ENCODE measurements at regions of chr7 and their contacts with region 1.

Region 1: DNA sequence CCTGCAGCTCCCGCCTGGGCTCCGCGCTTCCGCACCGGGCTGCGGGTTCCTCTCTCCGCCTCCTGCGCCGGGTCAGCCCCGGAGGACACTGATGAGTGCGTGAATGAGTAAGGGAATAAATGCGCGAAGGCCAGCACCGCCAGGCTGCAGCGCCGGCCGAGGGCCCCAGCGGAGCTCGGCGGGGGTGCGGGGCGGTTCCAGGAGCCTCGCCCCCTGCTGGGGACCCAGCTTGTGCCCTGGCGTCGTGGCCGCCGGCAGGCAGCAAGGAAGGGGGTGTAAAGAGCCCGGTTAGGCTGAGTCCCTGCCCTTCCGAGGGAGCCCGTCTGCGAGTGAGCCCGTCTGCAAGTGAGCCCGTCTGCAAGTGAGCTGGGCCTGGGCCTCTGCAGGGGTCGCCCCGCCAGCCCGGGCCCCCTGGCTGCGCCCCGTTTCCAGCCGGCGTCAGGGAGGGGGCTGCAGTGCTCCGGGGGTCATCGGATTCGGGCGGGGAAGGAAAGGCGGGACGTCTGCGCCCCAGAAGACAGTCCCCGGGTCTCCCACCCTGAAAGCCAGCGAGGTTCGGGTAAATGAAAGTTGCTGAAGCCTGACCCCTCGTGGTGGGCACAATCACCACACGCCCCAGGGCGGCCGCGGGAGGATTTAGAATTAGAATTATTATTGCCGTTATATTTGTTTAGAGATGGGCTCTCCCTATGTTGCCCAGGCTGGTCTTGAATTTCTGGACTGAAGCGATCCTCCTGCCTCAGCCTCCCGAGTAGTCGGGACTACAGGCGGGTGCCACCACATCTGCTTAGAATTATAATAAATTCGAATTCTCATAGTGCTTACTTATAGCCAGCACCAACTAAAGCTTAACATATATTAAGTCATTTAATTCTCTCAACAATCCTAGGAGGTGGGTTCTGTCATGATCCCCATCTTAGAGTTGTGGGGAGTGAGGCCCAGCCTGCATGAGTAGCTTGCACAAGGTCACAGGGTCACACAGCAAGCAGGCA is 8.6 kb upstream of the CRYGN start:
- DNase-seq: peak; percentile 88
- H3K4me3 ChIP-seq: peak overlapping the region; percentile 41 to 57 (median 54)
- H3K27ac ChIP-seq: peak overlapping the region; percentile 62 to 83 (median 75)
- H3K4me1 ChIP-seq: peaks cover 0 to 8% (median 4%) of the 10 kb centered on the region in 4 donors
- H3K27me3 ChIP-seq: no peaks in the 10 kb centered on the region
- CTCF ChIP-seq: peak; percentile 71 to 83 (median 77)
- EP300 ChIP-seq: no peak
- POLR2A ChIP-seq: no peak

Region 2: GRCh38 chr7:151244196-151244840 is 204.2 kb before region 1 on chr7:
- intact Hi-C with region 1: loop called (anchors 5 kb)
- DNase-seq: no peak
- H3K4me3 ChIP-seq: peak overlapping the region in 1 of 4 donors; percentile 52
- H3K27ac ChIP-seq: peak overlapping the region in 1 of 4 donors; percentile 94
- H3K4me1 ChIP-seq: peaks cover 0 to 61% (median 55%) of the 10 kb centered on the region in 4 donors
- H3K27me3 ChIP-seq: peaks cover 0 to 6% (median 2%) of the 10 kb centered on the region in 3 donors
- CTCF ChIP-seq: peak; percentile 56 to 91 (median 72)
- EP300 ChIP-seq: no peak
- POLR2A ChIP-seq: no peak

Region 3: GRCh38 chr7:151315038-151315655 is 133.4 kb before region 1 on chr7:
- intact Hi-C with region 1: loop called (anchors 1 kb)
- DNase-seq: peak; percentile 84
- H3K4me3 ChIP-seq: no peak overlapping the region
- H3K27ac ChIP-seq: no peak overlapping the region
- H3K4me1 ChIP-seq: peaks cover 0 to 14% (median 4%) of the 10 kb centered on the region in 4 donors
- H3K27me3 ChIP-seq: no peaks in the 10 kb centered on the region
- CTCF ChIP-seq: peak; percentile 41 to 87 (median 82)
- EP300 ChIP-seq: no peak
- POLR2A ChIP-seq: no peak

Region 4: DNA sequence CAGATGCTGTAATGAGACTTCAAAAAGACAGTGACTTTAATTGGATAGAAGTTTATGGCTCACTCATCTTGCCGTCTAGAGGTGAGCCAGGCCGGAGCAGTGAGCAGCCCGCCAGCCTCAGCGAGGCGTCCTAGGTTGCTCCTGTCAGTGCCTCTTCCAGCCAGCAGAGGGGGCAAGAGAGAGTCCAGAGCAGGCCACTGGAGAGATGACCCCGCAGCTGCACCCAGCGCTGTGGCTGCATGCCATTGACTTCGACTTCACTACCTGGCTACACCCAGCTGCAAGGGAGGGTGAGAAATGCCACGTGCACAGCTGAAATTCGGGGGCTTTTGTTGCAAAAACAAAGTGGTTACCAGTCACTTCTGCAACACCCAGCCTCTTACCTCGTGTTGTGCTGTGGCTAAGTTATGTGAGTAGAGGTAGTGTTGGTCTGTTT is 80.4 kb before region 1 on chr7:
- intact Hi-C with region 1: loop called (anchors 1 kb)
- DNase-seq: peak; percentile 93
- H3K4me3 ChIP-seq: no peak overlapping the region
- H3K27ac ChIP-seq: peak overlapping the region; percentile 60 to 84 (median 80)
- H3K4me1 ChIP-seq: peaks cover 0 to 36% (median 31%) of the 10 kb centered on the region in 4 donors
- H3K27me3 ChIP-seq: no peaks in the 10 kb centered on the region
- CTCF ChIP-seq: peak; percentile 94 to 98 (median 96)
- EP300 ChIP-seq: no peak
- POLR2A ChIP-seq: no peak

Region 5: GRCh38 chr7:151410405-151411390 is 37.9 kb before region 1 on chr7:
- intact Hi-C with region 1: loop called (anchors 5 kb)
- DNase-seq: peak; percentile 71
- H3K4me3 ChIP-seq: peak overlapping the region; percentile 35 to 53 (median 44)
- H3K27ac ChIP-seq: peak overlapping the region; percentile 59 to 71 (median 66)
- H3K4me1 ChIP-seq: peaks cover 0 to 22% (median 17%) of the 10 kb centered on the region in 4 donors
- H3K27me3 ChIP-seq: peaks cover 22 to 56% (median 36%) of the 10 kb centered on the region in 3 donors
- CTCF ChIP-seq: no peak
- EP300 ChIP-seq: no peak
- POLR2A ChIP-seq: no peak

Measured in sigmoid colon (tissue), 7 donors.